Heart left ventricle (tissue), 16 donors: ENCODE measurements at regions of chr5 and their contacts with region 1.

Region 1: GRCh38 chr5:65760504-65761275 is 38.7 kb downstream of the NLN start:
- DNase-seq: peak in 4 of 5 donors; percentile 26 to 45 (median 42)
- ATAC-seq: peak; percentile 71 to 93 (median 86)
- H3K4me3 ChIP-seq: no peak overlapping the region
- H3K27ac ChIP-seq: peak overlapping the region in 1 of 12 donors; percentile 26
- H3K4me1 ChIP-seq: peaks cover 0 to 11% (median 2%) of the 10 kb centered on the region in 12 donors
- H3K27me3 ChIP-seq: no peaks in the 10 kb centered on the region
- CTCF ChIP-seq: peak in 9 of 12 donors; percentile 28 to 67 (median 53)
- POLR2A ChIP-seq: no peak

Region 2: DNA sequence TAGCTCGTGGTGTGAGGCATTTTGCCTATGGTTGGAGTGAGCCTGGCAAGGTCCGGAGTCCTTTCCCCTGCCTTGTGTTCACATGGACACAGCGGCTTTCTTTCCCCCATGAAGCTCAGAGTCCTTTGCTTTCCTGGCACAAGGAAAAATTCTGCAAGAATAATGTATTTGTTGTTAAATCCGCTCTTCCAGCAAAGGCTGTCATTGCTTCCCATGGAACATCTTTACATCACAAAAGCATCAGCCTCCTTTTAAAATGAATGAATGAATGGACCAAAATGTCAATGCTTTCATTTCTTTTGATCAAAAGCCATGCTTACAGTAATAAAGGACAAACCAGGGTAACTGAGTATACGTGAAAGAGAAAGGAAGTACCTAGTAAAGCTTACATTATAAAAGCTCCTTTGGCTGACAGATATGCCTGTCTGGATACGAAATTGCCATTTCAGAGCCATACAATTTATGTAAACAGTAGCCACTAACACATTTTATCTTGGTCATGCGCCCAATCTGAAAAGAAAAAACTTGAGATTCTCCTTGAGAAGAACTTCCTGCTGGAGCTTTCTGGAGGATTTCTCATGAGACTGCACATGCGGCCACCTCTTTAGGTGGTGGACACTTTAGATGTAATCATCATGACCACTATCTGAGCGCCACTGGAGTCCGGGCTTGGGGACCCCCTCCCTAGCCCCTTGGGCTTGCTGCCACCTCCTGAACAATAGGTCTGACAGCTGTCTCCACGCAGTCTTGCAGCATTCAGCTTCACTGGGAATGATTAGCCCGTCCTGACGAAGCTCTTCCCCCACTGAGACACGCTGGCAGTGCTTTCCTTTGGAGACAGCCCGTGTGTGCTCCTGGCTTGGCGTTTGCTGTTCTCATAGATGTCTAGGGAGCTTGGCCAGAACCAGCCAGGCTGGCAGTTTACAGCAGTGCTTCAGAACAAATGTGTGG is 634.8 kb before region 1 on chr5:
- intact Hi-C with region 1: no loop called
- DNase-seq: peak in 2 of 5 donors; percentile 49
- ATAC-seq: peak in 3 of 4 donors; percentile 63 to 81 (median 74)
- H3K4me3 ChIP-seq: peak overlapping the region in 1 of 12 donors; percentile 20
- H3K27ac ChIP-seq: peak overlapping the region in 3 of 12 donors; percentile 1 to 48 (median 23)
- H3K4me1 ChIP-seq: peaks cover 0 to 26% (median 7%) of the 10 kb centered on the region in 12 donors
- H3K27me3 ChIP-seq: no peaks in the 10 kb centered on the region
- CTCF ChIP-seq: no peak
- POLR2A ChIP-seq: no peak

Region 3: DNA sequence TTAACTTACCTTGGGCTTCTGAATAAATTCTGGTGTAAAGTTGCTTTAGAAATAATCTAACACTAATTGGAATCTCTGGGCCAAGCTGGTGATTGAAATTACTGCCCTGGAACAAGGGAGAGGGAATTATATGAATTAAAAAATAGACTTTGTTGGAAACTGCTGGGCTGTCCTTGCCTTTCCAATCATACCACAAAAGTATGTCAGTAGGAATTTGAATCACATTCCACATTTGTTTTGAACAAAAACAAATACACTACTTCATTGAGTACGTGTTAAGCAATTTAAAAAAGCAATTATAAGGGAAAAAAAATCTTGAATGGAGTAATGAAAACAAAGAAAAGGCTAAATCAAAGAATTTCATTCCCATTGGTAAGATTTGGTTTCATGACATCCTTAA is 280.9 kb after region 1 on chr5:
- intact Hi-C with region 1: loop called in 1 of 10 experiments (anchors 10 kb)
- DNase-seq: no peak
- ATAC-seq: no peak
- H3K4me3 ChIP-seq: no peak overlapping the region
- H3K27ac ChIP-seq: no peak overlapping the region
- H3K4me1 ChIP-seq: no peaks in the 10 kb centered on the region
- H3K27me3 ChIP-seq: no peaks in the 10 kb centered on the region
- CTCF ChIP-seq: no peak
- POLR2A ChIP-seq: no peak

Region 4: GRCh38 chr5:66144074-66144833 is 383.6 kb after region 1 on chr5 and contains the start of gene SREK1:
- intact Hi-C with region 1: loop called in 2 of 10 experiments (anchors 5 to 10 kb)
- DNase-seq: peak; percentile 91 to 96 (median 94)
- ATAC-seq: peak; percentile 95 to 98 (median 96)
- H3K4me3 ChIP-seq: peak within 1 kb of the TSS; percentile 70 to 95 (median 84)
- H3K27ac ChIP-seq: peak within 1 kb of the TSS; percentile 95 to 100 (median 99)
- H3K4me1 ChIP-seq: peaks cover 4 to 44% (median 32%) of the 10 kb centered on the region in 12 donors
- H3K27me3 ChIP-seq: no peaks in the 10 kb centered on the region
- CTCF ChIP-seq: no peak
- POLR2A ChIP-seq: peak in 1 of 2 donors; percentile 76
- total RNA-seq, gene SREK1: 13.5 to 34.2 (median 28.4) TPM

Region 5: DNA sequence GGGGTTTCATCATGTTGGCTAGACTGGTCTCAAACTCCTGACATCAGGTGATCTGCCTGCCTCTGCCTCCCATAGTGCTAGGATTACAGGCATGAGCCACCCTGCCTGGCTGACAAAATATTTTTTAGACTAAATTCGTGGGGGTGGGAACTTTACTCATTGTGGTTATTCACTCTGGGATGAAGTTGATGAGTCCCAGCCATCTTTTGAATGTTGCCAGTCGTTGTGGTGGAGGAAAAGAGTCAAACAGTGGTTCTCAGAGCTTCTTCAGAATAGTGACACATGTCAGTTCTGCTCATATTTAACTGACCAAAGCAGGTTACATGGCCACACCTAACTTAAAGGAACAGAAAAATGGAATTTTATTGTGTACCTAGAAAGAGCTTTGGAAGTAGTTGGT is 390.3 kb after region 1 on chr5:
- intact Hi-C with region 1: loop called in 2 of 10 experiments (anchors 10 kb)
- DNase-seq: no peak
- ATAC-seq: no peak
- H3K4me3 ChIP-seq: no peak overlapping the region
- H3K27ac ChIP-seq: no peak overlapping the region
- H3K4me1 ChIP-seq: peaks cover 4 to 64% (median 27%) of the 10 kb centered on the region in 12 donors
- H3K27me3 ChIP-seq: no peaks in the 10 kb centered on the region
- CTCF ChIP-seq: no peak
- POLR2A ChIP-seq: no peak

Region 6: DNA sequence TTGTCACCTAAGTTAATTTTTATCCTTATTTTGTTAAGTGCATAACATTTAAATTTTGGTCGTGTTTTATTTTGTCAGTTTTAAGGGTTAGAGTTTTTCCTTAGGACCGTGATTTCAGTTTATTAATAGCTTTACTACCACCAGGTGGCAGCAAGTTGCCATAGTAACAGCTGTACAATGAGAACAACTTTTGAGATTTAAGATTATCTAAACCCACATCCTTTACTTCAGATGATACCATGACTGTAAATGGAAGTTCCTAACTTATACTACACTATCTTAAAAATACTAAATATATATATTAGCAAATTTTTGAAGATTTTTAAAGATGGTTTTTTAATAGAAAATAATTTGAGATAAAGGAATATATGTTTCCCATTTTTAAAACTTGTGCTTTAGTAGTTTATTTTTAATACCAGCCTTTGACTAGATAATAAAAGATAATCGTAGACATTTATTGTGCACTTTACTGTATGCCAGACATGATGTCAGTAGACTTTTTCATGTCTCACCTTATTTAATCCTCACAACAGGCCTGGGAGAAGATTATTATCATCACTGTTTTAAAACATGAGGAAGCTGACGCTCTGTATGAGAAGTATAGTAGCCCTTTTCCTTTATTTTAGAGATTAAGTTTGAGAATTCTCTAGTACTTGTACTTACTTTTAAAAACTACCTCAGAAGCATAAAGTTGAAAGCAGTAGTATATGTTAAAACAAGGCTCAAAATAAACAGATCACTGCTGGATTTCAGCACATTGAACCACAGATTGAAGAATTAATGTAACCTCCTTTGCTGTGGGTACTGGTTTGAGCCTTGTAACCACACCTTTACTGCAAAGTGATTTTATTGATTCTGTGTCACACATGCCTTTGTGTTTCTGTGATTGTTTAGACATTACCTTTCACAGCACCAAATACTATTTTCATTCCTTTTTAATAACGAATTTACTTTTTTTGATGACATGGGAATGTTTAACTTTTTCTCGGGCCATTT is 411.0 kb after region 1 on chr5:
- intact Hi-C with region 1: loop called in 1 of 10 experiments (anchors 10 kb)
- DNase-seq: no peak
- ATAC-seq: peak in 2 of 4 donors; percentile 55 to 56
- H3K4me3 ChIP-seq: no peak overlapping the region
- H3K27ac ChIP-seq: no peak overlapping the region
- H3K4me1 ChIP-seq: peaks cover 0 to 10% (median 0%) of the 10 kb centered on the region in 12 donors
- H3K27me3 ChIP-seq: no peaks in the 10 kb centered on the region
- CTCF ChIP-seq: peak; percentile 14 to 71 (median 55)
- POLR2A ChIP-seq: no peak